ENCODE measurements at regions of chr13 and their contacts with region 1.

Region 1: DNA sequence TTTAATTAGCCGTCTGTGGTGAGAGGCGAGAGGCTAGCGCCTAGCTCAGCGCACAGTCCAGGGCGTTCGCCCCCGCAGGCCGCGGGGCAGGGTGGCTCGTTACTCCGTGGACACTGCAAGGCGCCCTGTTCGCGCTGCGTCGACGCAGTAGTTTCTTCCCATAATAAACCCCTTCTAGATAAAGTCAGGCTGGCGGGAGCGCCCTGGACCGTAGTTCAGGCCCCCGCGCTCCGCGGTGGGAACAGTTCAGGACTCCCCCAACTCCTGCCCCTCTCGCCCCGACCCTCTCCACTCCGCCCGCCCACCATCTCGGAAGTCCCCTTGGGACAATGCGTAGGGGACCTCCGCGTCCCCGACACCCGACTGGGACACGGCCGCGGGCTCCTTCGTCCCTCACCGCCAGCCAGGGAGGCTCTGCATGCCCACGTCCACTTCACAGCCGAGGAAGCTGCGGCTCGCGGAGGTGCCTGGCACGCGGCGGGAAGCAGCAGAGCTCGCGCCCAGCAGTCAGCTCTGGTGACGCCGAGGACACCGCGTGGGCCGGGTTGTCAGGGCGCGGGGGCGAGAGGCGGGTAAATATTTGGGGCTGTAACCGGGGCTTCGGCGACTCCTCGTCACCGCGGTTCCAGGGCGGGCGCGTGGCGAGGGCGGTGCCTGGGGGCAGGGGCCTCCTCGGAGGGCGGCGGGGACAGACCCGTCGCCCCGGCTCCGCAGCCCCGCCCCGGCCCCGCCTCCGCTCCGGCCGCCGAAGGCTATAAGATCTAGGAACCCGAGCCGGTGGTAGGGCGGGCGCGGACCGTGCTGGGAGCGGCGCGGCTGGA is at the start of gene RGCC:
- DNase-seq: peak; percentile 84
- H3K4me3 Mint-ChIP-seq: peak within 1 kb of the TSS; percentile 86
- H3K27ac Mint-ChIP-seq: peak within 1 kb of the TSS; percentile 82
- H3K4me1 Mint-ChIP-seq: peaks cover 38% of the 10 kb centered on the region
- H3K27me3 Mint-ChIP-seq: peaks cover 20% of the 10 kb centered on the region
- total RNA-seq, gene RGCC: 58.0 to 62.4 TPM

Region 2: DNA sequence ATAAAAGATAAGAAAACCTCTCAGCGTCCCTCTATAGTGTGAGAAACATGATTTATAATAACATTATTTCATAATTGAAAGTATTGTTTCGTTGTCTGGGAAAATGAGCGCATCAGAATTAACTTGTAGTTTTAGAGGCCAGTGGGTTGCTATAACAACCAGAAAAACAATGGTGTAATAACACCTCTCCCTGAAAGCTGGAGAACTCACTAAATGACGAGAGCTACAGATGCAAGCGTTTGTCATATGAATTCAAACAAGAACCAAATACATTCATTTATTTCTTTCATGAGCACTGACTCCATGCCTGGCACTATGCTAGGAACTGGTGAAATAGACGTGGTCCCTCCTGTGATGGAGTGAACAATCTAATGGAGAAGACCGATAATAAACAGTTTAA is 278.9 kb before region 1 on chr13:
- CTCF ChIA-PET with region 1: no interaction called
- POLR2A ChIA-PET with region 1: no interaction called
- DNase-seq: no peak
- H3K4me3 Mint-ChIP-seq: no peak overlapping the region
- H3K27ac Mint-ChIP-seq: no peak overlapping the region
- H3K4me1 Mint-ChIP-seq: peaks cover 2% of the 10 kb centered on the region
- H3K27me3 Mint-ChIP-seq: no peaks in the 10 kb centered on the region

Region 3: GRCh38 chr13:41334810-41335209 is 122.2 kb before region 1 on chr13:
- CTCF ChIA-PET with region 1: no interaction called
- POLR2A ChIA-PET with region 1: no interaction called
- DNase-seq: no peak
- H3K4me3 Mint-ChIP-seq: no peak overlapping the region
- H3K27ac Mint-ChIP-seq: no peak overlapping the region
- H3K4me1 Mint-ChIP-seq: peaks cover 1% of the 10 kb centered on the region
- H3K27me3 Mint-ChIP-seq: no peaks in the 10 kb centered on the region

Region 4: GRCh38 chr13:41356786-41357185 is 100.2 kb before region 1 on chr13:
- CTCF ChIA-PET with region 1: interaction called, 3 read pairs
- POLR2A ChIA-PET with region 1: interaction called, 11 read pairs
- DNase-seq: peak; percentile 41
- H3K4me3 Mint-ChIP-seq: peak overlapping the region; percentile 68
- H3K27ac Mint-ChIP-seq: peak overlapping the region; percentile 98
- H3K4me1 Mint-ChIP-seq: peaks cover 55% of the 10 kb centered on the region
- H3K27me3 Mint-ChIP-seq: no peaks in the 10 kb centered on the region

Region 5: DNA sequence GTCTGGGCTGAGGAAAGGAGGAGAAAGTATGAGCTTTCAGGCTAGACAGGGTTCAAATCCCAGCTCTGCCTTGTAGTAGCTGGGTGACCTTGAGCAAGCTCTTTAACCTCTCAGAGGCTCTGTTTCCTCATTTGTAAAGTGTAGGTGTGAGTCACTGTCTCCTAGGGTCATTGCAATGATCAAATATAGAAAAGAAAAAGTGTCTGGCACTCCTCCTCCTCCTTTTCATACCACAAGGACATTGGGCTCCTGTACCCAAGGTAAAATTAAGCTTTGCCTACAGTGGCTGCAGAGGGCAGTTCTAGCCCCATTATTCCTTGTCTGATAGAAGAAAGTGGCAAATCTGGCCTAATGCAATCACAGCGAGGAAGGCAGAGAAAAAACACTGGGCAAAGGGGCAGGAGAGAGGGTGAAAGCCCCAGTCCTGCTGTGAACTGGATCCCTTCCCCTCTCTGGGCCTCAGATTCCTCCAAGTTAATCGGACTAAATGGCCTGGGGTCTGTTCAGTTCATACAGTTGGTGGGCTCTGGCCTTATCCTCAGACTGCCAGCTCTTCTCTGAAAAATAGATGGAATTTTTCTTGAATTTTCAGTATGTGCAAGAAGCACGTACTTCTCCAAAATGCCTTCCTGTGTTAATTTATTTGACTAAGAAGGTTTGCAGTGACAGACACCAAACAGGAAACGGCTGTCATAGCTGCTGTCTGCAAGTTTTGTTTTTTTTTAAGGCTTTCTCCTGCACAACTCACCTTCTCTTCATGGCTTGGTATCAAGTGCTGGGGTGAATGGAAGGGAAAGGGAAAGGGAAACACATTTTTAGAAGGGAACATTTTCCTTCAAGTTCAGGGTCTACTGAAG is 35.7 kb after region 1 on chr13:
- CTCF ChIA-PET with region 1: interaction called, 16 read pairs
- POLR2A ChIA-PET with region 1: interaction called, 5 read pairs
- DNase-seq: peak; percentile 27
- H3K4me3 Mint-ChIP-seq: peak overlapping the region; percentile 15
- H3K27ac Mint-ChIP-seq: peak overlapping the region; percentile 92
- H3K4me1 Mint-ChIP-seq: peaks cover 49% of the 10 kb centered on the region
- H3K27me3 Mint-ChIP-seq: no peaks in the 10 kb centered on the region

Region 6: GRCh38 chr13:41500511-41500910 is 43.5 kb after region 1 on chr13:
- CTCF ChIA-PET with region 1: interaction called, 11 read pairs
- POLR2A ChIA-PET with region 1: interaction called, 4 read pairs
- DNase-seq: peak; percentile 69
- H3K4me3 Mint-ChIP-seq: no peak overlapping the region
- H3K27ac Mint-ChIP-seq: peak overlapping the region; percentile 63
- H3K4me1 Mint-ChIP-seq: peaks cover 49% of the 10 kb centered on the region
- H3K27me3 Mint-ChIP-seq: no peaks in the 10 kb centered on the region

Region 7: DNA sequence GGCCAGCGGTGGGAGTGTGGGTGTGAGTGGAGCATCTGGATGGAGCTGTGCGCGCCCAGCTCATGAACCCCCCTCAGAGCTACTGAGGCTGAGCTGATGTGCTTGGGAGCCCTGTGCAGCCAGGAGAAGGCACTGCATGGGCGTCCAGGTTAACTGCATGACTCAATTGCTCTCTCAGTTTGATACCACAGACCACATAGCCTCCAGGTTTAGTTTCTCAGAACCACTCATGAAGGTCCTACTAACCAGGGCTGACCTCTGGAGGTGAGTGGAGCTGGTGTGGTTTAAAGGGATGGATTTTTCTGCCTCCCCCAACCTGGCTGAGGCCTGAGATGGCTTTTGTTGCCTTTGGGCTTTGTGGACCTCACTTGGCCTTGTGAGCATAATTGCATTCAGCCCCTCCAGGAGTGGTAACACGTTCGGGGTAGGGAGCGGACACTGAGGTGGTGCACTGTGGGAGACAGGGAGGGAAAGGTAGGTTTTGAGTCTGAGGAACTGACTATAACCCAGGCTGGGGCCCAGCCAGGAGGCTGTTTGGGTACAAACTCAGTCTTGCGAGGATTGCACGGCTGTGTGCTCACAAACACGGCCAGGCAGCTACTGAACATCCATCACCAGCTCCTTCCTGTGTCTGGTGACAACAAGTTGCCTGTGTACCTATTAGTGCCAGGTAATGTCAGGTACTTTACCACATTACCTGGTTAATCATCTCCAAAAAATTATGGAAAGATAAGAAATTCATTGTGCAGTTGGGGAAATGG is 97.8 kb after region 1 on chr13:
- CTCF ChIA-PET with region 1: interaction called, 13 read pairs
- POLR2A ChIA-PET with region 1: interaction called, 3 read pairs
- DNase-seq: peak; percentile 38
- H3K4me3 Mint-ChIP-seq: no peak overlapping the region
- H3K27ac Mint-ChIP-seq: peak overlapping the region; percentile 2
- H3K4me1 Mint-ChIP-seq: peaks cover 18% of the 10 kb centered on the region
- H3K27me3 Mint-ChIP-seq: no peaks in the 10 kb centered on the region

Region 8: DNA sequence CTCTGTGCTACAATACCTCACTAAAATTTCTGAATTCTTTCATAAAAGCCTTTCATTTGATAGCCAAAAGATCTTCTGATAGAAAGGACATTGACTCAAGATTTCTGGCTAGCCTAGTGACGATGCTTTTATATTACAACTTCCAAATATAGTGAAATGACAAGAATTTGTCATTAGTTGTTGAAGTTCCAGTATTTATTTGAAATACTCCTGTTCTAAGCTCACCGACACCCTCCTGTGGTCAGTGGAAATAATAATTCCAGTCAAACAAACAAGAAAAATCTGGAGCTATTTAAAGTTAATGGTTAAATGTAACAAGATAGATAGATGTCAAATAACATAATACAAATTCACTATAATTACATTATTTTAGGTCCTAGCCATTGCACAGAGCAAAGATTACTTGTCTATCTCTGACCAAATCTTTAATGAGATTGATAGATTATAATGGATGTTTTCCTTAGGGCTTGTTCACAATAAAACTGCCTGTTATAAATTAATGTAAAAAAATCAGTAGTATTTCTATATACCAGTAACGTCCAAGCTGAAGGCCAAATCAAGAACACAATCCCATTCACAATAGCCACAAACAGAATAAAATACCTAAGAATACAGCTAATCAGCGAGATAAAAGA is 195.9 kb after region 1 on chr13:
- CTCF ChIA-PET with region 1: interaction called, 26 read pairs
- POLR2A ChIA-PET with region 1: interaction called, 6 read pairs
- DNase-seq: peak; percentile 35
- H3K4me3 Mint-ChIP-seq: no peak overlapping the region
- H3K27ac Mint-ChIP-seq: no peak overlapping the region
- H3K4me1 Mint-ChIP-seq: peaks cover 7% of the 10 kb centered on the region
- H3K27me3 Mint-ChIP-seq: no peaks in the 10 kb centered on the region

Measured in activated CD4-positive, alpha-beta memory T cell treated with anti-CD3 and anti-CD28 coated beads, Interleukin-2, amount 10 ng/mL, durations not matched to agents 7 days and 5 days (primary cell).